ENCODE measurements at regions of chr5 and their contacts with region 1.

Region 1: DNA sequence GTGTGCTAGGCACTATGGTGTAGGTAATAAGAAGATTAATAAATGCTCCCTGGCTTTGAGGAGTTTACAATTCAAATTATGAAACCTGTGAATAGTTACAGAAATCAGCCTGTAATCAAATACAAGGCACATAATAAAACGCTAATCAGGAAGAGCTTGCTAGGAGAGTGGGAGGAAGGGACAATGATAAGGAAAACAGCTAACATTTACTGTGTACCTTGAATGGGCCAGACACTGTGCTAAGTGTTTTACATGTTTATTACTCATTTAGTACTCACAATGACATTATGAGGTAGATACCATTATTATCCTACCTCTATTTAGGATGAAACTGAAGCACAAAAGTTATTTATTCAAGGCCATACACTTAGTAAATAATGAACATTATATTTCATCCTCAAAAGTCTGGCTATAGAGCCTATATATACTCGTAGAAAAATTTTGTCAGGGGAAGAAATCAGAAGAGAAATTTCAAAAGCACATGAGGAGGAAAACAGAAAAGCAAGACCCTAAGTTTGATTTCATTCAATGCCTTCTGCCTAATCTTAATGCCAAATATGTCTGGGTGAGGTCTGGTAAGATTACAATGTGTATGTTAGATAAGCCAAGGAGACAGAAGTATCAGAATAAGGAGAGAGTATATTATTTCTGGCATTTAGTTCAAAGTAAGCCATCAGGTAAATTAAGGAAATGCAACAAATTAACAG is 35.9 kb downstream of the AFF4 start:
- DNase-seq: no peak
- ATAC-seq: no peak
- H3K4me3 ChIP-seq: no peak overlapping the region
- H3K27ac ChIP-seq: no peak overlapping the region
- H3K4me1 ChIP-seq: peaks cover 0 to 4% of the 10 kb centered on the region in 2 donors
- H3K27me3 ChIP-seq: no peaks in the 10 kb centered on the region

Region 2: DNA sequence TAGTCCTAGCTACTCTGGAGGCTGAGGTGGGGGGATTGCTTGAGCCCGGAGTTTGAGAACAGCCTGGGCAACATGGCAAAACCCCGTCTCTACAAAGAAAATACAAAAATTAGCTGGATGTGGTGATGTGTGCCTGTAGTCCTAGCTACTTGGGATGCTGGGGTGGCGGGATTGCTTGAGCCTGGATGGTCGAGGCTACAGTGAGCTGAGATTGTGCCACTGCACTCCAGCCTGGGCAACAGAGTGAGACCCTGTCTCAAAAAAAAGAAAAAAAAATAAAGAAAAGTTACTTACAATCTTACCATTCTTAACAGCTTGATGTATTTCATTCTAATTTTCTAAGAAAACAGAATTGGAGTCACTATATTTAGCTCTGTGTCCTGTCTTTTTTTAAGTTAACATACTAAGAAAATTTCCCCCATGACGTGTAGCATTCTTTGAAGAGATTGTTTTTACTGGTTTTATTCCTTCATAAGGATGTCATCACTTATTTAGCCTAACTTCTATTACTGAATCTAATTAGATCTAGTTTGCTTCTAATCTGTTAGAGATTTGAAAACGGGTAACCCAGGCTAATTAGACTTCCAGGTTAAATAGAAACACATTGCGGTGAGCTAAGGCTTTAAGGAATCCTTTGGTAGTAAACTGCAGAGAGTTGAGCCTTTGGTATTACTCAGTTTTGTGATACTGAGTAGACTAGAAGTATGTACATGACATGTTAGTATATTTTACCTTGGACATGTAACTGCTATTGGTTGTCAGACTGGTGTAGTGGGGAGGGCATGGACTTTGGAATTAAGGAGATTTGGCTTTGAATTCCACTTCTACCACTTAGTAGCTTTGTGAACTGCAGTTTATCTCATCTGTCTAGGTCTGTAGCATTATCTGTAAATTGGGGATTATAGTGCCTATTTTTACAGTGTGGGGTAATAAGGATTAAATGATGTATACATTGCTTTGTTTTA is 148.3 kb after region 1 on chr5:
- intact Hi-C with region 1: loop called in 1 of 2 experiments (anchors 5 kb)
- DNase-seq: no peak
- ATAC-seq: no peak
- H3K4me3 ChIP-seq: peak overlapping the region in 1 of 2 donors; percentile 14
- H3K27ac ChIP-seq: peak overlapping the region; percentile 61 to 90
- H3K4me1 ChIP-seq: peaks cover 0 to 2% of the 10 kb centered on the region in 2 donors
- H3K27me3 ChIP-seq: no peaks in the 10 kb centered on the region